ENCODE measurements at regions of chr22 and their contacts with region 1.

Region 1: GRCh38 chr22:38181453-38182247 is at the start of gene PLA2G6:
- DNase-seq: peak; percentile 97 to 98 (median 98)
- ATAC-seq: peak; percentile 91
- H3K4me3 ChIP-seq: peak within 1 kb of the TSS; percentile 49
- H3K27ac ChIP-seq: peak within 1 kb of the TSS; percentile 100
- H3K4me1 ChIP-seq: peaks cover 46% of the 10 kb centered on the region in 2 experiments
- H3K27me3 ChIP-seq: no peaks in the 10 kb centered on the region
- CTCF ChIP-seq: no peak
- EP300 ChIP-seq: no peak
- POLR2A ChIP-seq: peak; percentile 73
- RAD21 ChIP-seq: no peak
- polyA plus RNA-seq, gene PLA2G6: 0.11 to 0.13 TPM

Region 2: GRCh38 chr22:38143036-38143697 is 38.5 kb before region 1 on chr22:
- CTCF ChIA-PET with region 1: no interaction called
- POLR2A ChIA-PET with region 1: interaction called, 9 read pairs
- in situ Hi-C with region 1: no loop called
- intact Hi-C with region 1: loop called (anchors 2 kb)
- DNase-seq: peak in 2 of 4 experiments; percentile 72 to 83
- ATAC-seq: peak; percentile 85
- H3K4me3 ChIP-seq: no peak overlapping the region
- H3K27ac ChIP-seq: peak overlapping the region; percentile 66
- H3K4me1 ChIP-seq: peaks cover 26 to 32% of the 10 kb centered on the region in 2 experiments; a peak in 4 of 5 replicates
- H3K27me3 ChIP-seq: no peaks in the 10 kb centered on the region
- CTCF ChIP-seq: no peak
- EP300 ChIP-seq: peak; percentile 85
- POLR2A ChIP-seq: no peak
- RAD21 ChIP-seq: no peak; a peak in 1 of 4 replicates